Activated CD8-positive, alpha-beta T cell treated with anti-CD3 and anti-CD28 coated beads for 36 hours (primary cell): ENCODE measurements at regions of chr1 and their contacts with region 1.

Region 1: DNA sequence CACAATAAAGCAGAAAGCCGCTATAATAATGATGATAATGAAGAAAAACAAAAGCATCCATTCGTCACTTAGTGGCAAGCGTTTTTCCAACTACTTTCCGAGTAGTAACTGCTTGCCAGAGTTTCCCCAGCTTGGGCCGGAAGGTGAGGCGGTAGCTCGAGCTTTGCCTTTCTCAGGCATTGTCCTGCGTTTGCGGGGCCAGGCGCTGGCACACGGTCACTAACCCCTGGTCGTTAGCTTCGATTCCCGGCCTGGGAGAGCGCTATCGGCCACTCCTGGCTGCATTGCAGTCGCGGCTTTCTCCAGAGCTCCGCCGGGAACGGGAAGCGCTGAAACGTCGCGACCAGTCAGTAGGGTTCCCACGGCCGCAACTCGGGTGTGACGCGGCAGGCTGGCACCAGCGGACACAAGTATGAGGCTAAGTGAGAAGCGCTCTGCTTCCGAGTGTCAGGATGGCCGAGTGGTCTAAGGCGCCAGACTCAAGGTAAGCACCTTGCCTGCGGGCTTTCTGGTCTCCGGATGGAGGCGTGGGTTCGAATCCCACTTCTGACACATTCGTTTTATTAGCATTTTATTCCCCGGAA is 14.6 kb upstream of the ZNF692 start:
- DNase-seq: peak; percentile 95
- ATAC-seq: peak; percentile 83
- H3K4me3 Mint-ChIP-seq: peak overlapping the region; percentile 90
- H3K27ac Mint-ChIP-seq: peak overlapping the region; percentile 95
- H3K4me1 Mint-ChIP-seq: peaks cover 19% of the 10 kb centered on the region
- H3K27me3 Mint-ChIP-seq: peaks cover 4% of the 10 kb centered on the region
- CTCF ChIP-seq: no peak

Region 2: GRCh38 chr1:248758352-248758751 is 115.1 kb before region 1 on chr1:
- CTCF ChIA-PET with region 1: no interaction called
- POLR2A ChIA-PET with region 1: no interaction called
- intact Hi-C with region 1: no loop called
- DNase-seq: no peak
- ATAC-seq: no peak
- H3K4me3 Mint-ChIP-seq: no peak overlapping the region
- H3K27ac Mint-ChIP-seq: no peak overlapping the region
- H3K4me1 Mint-ChIP-seq: no peaks in the 10 kb centered on the region
- H3K27me3 Mint-ChIP-seq: peaks cover 6% of the 10 kb centered on the region
- CTCF ChIP-seq: no peak

Region 3: GRCh38 chr1:248858891-248859889 is 14.3 kb before region 1 on chr1 and contains the start of gene ZNF692:
- CTCF ChIA-PET with region 1: interaction called, 14 read pairs
- POLR2A ChIA-PET with region 1: interaction called, 11 read pairs
- intact Hi-C with region 1: no loop called
- DNase-seq: peak; percentile 99
- ATAC-seq: peak; percentile 86
- H3K4me3 Mint-ChIP-seq: peak within 1 kb of the TSS; percentile 88
- H3K27ac Mint-ChIP-seq: peak within 1 kb of the TSS; percentile 95
- H3K4me1 Mint-ChIP-seq: peaks cover 37% of the 10 kb centered on the region
- H3K27me3 Mint-ChIP-seq: no peaks in the 10 kb centered on the region
- CTCF ChIP-seq: no peak
- total RNA-seq, gene ZNF692: 80.8 to 85.6 TPM

Region 4: DNA sequence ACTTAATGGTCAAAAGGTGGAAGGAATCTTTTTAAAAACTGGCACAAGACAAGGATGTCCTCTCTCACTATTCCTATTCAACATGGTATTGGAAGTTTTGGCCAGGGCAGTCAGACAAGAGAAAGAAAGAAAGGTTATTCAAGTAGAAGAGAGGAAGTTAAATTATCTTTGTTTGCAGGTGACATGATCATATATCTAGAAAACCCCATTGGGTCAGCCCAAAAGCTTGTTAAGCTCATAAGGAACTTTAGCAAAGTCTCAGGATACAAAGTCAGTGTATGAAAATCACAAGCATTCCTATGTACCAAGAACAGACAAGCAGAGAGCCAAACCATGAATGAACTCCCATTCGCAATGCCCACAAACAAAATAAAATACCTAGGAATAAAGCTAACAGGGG is 27.1 kb after region 1 on chr1:
- CTCF ChIA-PET with region 1: no interaction called
- POLR2A ChIA-PET with region 1: no interaction called
- intact Hi-C with region 1: no loop called
- DNase-seq: no peak
- ATAC-seq: no peak
- H3K4me3 Mint-ChIP-seq: no peak overlapping the region
- H3K27ac Mint-ChIP-seq: no peak overlapping the region
- H3K4me1 Mint-ChIP-seq: no peaks in the 10 kb centered on the region
- H3K27me3 Mint-ChIP-seq: peaks cover 9% of the 10 kb centered on the region
- CTCF ChIP-seq: no peak